ENCODE measurements at regions of chrX and their contacts with region 1.

Region 1: GRCh38 chrX:31036895-31037294 is 34.9 kb downstream of the FTHL17 start:
- DNase-seq: peak; percentile 54
- H3K4me3 ChIP-seq: no peak overlapping the region
- H3K27ac ChIP-seq: no peak overlapping the region
- H3K4me1 ChIP-seq: peaks cover 24% of the 10 kb centered on the region
- CTCF ChIP-seq: peak; percentile 77

Region 2: GRCh38 chrX:31293409-31293808 is 256.5 kb after region 1 on chrX:
- CTCF ChIA-PET with region 1: interaction called, 3 read pairs
- POLR2A ChIA-PET with region 1: no interaction called
- intact Hi-C with region 1: loop called (anchors 1 kb)
- DNase-seq: peak; percentile 41
- H3K4me3 ChIP-seq: no peak overlapping the region
- H3K27ac ChIP-seq: no peak overlapping the region
- H3K4me1 ChIP-seq: no peaks in the 10 kb centered on the region
- CTCF ChIP-seq: peak; percentile 77

Region 3: GRCh38 chrX:31658360-31658759 is 621.5 kb after region 1 on chrX:
- CTCF ChIA-PET with region 1: interaction called, 6 read pairs
- POLR2A ChIA-PET with region 1: interaction called, 4 read pairs
- intact Hi-C with region 1: loop called (anchors 1 kb)
- DNase-seq: peak; percentile 31
- H3K4me3 ChIP-seq: no peak overlapping the region
- H3K27ac ChIP-seq: no peak overlapping the region
- H3K4me1 ChIP-seq: no peaks in the 10 kb centered on the region
- CTCF ChIP-seq: peak; percentile 81

Measured in OCI-LY7 (cell line).